GM13976 (cell line): ENCODE measurements at regions of chr4 and their contacts with region 1.

Region 1: GRCh38 chr4:182806259-182807252 is 110.6 kb downstream of the DCTD start:
- DNase-seq: peak; percentile 87
- CTCF ChIP-seq: peak; percentile 91

Region 2: GRCh38 chr4:182486881-182487280 is 319.7 kb before region 1 on chr4:
- in situ Hi-C with region 1: loop called (anchors 10 kb)
- DNase-seq: no peak
- CTCF ChIP-seq: no peak

Region 3: DNA sequence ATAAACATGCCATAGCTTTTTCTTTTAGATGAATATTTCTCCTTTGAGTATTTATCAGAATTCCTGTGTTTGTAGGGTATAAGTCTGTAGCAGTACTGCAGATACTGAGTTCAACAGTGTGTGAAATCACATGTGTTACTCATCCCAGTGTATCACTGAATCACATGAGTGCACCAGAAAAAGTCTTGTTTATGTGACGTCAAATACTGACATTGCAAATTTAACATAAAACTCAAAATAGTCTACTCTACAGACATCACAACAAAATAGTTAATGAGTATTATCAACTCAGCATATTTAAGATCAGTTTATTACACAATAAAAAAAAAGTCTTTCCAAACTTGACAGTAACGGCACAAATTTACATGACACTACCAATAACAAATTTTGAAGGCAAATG is 110.7 kb before region 1 on chr4:
- in situ Hi-C with region 1: no loop called
- DNase-seq: no peak
- CTCF ChIP-seq: no peak

Region 4: GRCh38 chr4:183261953-183262775 is 455.6 kb after region 1 on chr4:
- in situ Hi-C with region 1: loop called (anchors 25 kb)
- DNase-seq: peak; percentile 68
- CTCF ChIP-seq: peak; percentile 69

Region 5: DNA sequence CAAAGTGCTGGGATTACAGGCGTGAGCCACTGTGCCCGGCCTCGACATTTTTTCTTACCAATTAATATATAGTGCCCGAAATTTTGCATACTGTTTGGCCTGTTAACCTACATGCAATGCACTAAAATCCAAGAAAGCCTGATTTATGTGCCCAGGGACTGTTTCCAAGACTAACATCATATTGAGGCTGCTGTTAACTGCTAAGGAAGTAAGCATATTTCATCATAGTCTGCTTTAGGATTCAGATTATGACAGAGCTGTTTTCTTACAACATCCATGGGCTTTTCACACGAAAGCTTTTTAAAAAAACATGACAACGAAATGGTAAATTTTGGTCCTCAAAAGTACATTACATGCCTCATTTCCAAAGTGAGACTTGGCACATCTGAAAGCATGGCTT is 1182.9 kb after region 1 on chr4:
- in situ Hi-C with region 1: no loop called
- DNase-seq: no peak
- CTCF ChIP-seq: no peak